ENCODE measurements at regions of chr19 and their contacts with region 1.

Region 1: DNA sequence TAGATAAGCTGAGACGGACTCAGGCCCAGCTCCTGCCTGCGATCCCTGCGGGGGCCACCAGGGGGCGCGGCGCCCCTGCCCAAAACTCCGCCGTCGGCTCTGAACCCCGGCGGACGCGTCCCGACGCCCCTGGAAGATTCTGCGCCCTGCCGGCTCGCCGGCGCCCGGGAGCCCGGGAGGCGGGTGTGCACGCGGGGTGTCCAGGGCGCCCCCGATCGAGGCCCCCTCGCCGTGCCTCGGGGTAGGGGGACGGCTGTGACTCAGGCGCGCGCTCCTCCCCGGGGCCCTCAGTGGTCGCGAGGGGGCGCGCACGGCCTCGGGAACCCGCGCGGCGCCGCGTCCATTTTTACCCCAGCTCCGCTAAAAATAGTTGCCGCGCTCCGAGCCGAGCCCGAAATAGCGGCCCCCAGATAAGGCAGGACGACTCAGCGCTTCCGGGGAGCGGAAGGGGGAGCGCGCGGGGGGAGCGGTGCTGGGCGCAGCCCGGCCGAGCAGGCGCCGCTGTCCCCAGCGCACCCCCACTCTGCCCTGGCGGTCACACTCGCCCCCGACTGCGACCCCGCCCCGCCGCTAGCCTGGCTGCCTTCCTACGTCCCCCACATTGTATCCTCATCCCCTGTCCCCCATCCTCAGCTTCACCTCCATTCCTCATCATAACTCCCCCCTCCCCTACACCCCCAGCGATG is 16.0 kb upstream of the ERCC1 start:
- DNase-seq: peak; percentile 95
- ATAC-seq: peak; percentile 42
- H3K4me3 ChIP-seq: peak overlapping the region in 4 of 5 experiments; percentile 21 to 80 (median 60)
- H3K4me3 Mint-ChIP-seq: peak overlapping the region; percentile 85
- H3K27ac ChIP-seq: peak overlapping the region; percentile 48 to 82
- H3K27ac Mint-ChIP-seq: peak overlapping the region; percentile 91
- H3K4me1 ChIP-seq: peaks cover 31 to 36% of the 10 kb centered on the region in 2 donors
- H3K4me1 Mint-ChIP-seq: peaks cover 31% of the 10 kb centered on the region
- H3K27me3 ChIP-seq: no peaks in the 10 kb centered on the region
- H3K27me3 Mint-ChIP-seq: no peaks in the 10 kb centered on the region
- CTCF ChIP-seq: peak; percentile 100

Region 2: DNA sequence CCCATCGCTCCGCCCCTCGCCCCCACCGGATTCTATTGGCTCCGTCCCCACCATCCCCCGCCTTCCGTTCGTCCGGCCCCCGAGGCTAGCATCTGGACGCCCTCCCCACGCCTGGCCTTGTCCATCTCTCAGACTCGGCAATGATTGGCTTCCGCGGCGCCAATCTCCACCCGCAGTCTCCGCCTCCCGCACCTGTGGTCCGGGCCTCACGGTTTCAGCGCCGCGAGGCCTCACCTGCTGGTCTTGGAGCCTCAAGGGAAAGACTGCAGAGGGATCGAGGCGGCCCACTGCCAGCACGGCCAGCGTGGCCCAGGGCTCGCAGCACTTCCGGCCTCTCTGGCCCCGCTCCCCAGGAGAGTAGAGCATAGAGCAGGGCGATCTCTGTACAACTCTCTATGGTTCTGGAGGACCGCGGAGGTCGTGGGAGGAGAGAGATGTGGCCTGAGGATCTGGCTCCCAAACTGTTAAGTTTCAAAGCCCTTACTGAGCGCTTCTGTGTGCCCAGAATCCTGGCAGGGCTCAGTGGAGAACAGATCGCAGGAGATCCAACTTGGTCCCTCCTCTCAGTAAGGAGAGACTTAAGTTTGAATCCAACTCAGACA is 16.0 kb before region 1 on chr19 and contains the start of gene ERCC1:
- CTCF ChIA-PET with region 1: interaction called, 13 read pairs
- POLR2A ChIA-PET with region 1: interaction called, 3 read pairs
- intact Hi-C with region 1: loop called (anchors 2 kb)
- DNase-seq: peak; percentile 87
- ATAC-seq: peak; percentile 79
- H3K4me3 ChIP-seq: peak within 1 kb of the TSS; percentile 26 to 77 (median 69)
- H3K4me3 Mint-ChIP-seq: peak within 1 kb of the TSS; percentile 97
- H3K27ac ChIP-seq: peak within 1 kb of the TSS; percentile 64 to 73
- H3K27ac Mint-ChIP-seq: peak within 1 kb of the TSS; percentile 94
- H3K4me1 ChIP-seq: peaks cover 36 to 62% of the 10 kb centered on the region in 2 donors
- H3K4me1 Mint-ChIP-seq: peaks cover 58% of the 10 kb centered on the region
- H3K27me3 ChIP-seq: peaks cover 0 to 11% (median 4%) of the 10 kb centered on the region in 4 experiments
- H3K27me3 Mint-ChIP-seq: peaks cover 11% of the 10 kb centered on the region
- CTCF ChIP-seq: no peak
- total RNA-seq, gene ERCC1: 75.7 and 80.2 TPM in 2 replicates

Region 3: DNA sequence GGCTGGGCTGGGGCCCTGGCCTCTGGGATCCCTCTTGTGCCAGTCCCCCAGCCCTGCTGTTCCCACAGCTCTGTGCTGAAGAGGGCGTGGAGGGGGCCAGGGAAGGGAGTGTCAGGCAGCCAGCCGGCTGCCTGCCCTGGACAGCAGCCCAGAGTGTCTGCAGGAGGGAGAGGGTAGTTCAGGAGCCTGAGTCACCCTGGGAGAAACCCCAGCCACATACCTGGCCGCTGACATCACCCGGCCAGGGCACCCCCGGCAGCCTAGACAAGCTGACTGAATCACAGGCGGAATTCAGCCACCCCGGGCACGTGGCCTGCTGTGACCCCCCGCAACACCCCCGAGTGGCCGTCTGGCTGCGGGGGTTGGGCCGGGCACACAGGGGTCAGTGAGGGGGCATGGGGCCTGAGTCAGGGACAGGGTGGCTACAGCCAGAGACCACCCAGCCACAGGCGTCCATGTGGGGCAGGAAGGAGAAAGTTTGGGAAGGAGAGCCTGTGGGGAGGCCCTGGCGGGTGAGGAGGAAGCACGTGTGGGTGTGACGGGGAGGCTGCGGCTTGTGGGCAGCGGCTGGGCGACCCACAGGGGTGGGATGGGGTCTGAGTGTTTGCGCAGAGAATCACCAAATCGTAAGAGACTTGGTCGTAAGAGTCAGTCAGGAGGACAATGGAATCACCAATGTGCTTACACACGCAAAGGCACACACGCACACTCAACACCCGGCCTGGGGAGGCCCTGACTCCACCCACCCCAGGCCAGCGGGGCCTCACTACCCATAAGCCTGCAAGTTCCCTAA is 16.2 kb after region 1 on chr19:
- CTCF ChIA-PET with region 1: interaction called, 13 read pairs
- POLR2A ChIA-PET with region 1: interaction called, 8 read pairs
- intact Hi-C with region 1: no loop called
- DNase-seq: peak; percentile 90
- ATAC-seq: peak; percentile 56
- H3K4me3 ChIP-seq: peak overlapping the region in 1 of 5 experiments; percentile 3
- H3K4me3 Mint-ChIP-seq: peak overlapping the region; percentile 60
- H3K27ac ChIP-seq: peak overlapping the region in 1 of 2 donors; percentile 64
- H3K27ac Mint-ChIP-seq: peak overlapping the region; percentile 77
- H3K4me1 ChIP-seq: peaks cover 23 to 38% of the 10 kb centered on the region in 2 donors
- H3K4me1 Mint-ChIP-seq: peaks cover 43% of the 10 kb centered on the region
- H3K27me3 ChIP-seq: peaks cover 0 to 2% (median 0%) of the 10 kb centered on the region in 4 experiments
- H3K27me3 Mint-ChIP-seq: no peaks in the 10 kb centered on the region
- CTCF ChIP-seq: no peak

Region 4: DNA sequence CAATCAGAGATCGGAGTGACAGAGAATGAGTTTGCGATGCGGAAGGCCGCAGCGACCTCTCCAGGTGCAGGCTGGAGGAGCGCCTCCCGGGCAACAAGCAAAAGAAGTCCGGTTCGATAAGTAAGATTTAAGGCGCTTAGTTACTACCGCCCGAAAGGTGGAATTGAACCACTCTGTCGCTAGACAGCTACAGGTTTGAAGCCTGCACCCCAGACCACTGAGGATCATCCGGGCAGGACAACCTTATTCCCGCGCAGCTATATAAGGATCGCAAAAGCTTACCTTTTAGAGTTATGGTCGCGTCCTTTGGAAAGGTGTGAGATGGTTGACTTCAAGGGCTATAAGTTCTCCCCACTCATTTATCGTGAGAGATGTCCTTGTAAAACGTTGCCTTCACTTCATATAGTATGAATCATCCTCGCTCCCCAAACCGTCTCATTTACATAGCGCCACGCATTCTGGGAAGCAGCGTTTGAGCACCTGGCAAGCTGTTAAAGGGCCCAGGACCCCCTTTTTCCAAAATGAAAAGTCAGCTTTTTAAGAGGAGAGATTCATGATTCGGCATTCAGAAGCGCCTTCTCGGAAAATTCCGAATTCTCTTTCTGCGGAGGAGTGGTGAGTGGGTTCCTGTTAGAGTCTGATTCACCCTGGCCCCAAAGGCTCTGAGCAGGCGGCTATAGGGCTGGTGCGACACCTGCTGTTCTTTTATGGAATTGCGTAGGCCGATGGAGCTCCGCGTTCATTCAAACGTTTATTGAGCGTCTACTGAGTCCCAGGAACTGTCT is 38.9 kb after region 1 on chr19:
- CTCF ChIA-PET with region 1: interaction called, 453 read pairs
- POLR2A ChIA-PET with region 1: interaction called, 36 read pairs
- intact Hi-C with region 1: loop called (anchors 1 kb)
- DNase-seq: peak; percentile 95
- ATAC-seq: peak; percentile 83
- H3K4me3 ChIP-seq: peak overlapping the region; percentile 67 to 98 (median 79)
- H3K4me3 Mint-ChIP-seq: peak overlapping the region; percentile 74
- H3K27ac ChIP-seq: peak overlapping the region; percentile 99 to 100
- H3K27ac Mint-ChIP-seq: peak overlapping the region; percentile 98
- H3K4me1 ChIP-seq: peaks cover 7 to 16% of the 10 kb centered on the region in 2 donors
- H3K4me1 Mint-ChIP-seq: peaks cover 26% of the 10 kb centered on the region
- H3K27me3 ChIP-seq: peaks cover 0 to 6% (median 3%) of the 10 kb centered on the region in 4 experiments
- H3K27me3 Mint-ChIP-seq: peaks cover 10% of the 10 kb centered on the region
- CTCF ChIP-seq: peak; percentile 82

Region 5: GRCh38 chr19:45496349-45496953 is 56.7 kb after region 1 on chr19:
- CTCF ChIA-PET with region 1: interaction called, 26 read pairs
- POLR2A ChIA-PET with region 1: no interaction called
- intact Hi-C with region 1: no loop called
- DNase-seq: peak; percentile 66
- ATAC-seq: peak; percentile 6
- H3K4me3 ChIP-seq: peak overlapping the region in 4 of 5 experiments; percentile 52 to 64 (median 60)
- H3K4me3 Mint-ChIP-seq: peak overlapping the region; percentile 73
- H3K27ac ChIP-seq: no peak overlapping the region
- H3K27ac Mint-ChIP-seq: no peak overlapping the region
- H3K4me1 ChIP-seq: peaks cover 43 to 51% of the 10 kb centered on the region in 2 donors
- H3K4me1 Mint-ChIP-seq: peaks cover 45% of the 10 kb centered on the region
- H3K27me3 ChIP-seq: peaks cover 0 to 49% (median 24%) of the 10 kb centered on the region in 4 experiments
- H3K27me3 Mint-ChIP-seq: peaks cover 21% of the 10 kb centered on the region
- CTCF ChIP-seq: no peak